ENCODE measurements at regions of chr2 and their contacts with region 1.

Region 1: DNA sequence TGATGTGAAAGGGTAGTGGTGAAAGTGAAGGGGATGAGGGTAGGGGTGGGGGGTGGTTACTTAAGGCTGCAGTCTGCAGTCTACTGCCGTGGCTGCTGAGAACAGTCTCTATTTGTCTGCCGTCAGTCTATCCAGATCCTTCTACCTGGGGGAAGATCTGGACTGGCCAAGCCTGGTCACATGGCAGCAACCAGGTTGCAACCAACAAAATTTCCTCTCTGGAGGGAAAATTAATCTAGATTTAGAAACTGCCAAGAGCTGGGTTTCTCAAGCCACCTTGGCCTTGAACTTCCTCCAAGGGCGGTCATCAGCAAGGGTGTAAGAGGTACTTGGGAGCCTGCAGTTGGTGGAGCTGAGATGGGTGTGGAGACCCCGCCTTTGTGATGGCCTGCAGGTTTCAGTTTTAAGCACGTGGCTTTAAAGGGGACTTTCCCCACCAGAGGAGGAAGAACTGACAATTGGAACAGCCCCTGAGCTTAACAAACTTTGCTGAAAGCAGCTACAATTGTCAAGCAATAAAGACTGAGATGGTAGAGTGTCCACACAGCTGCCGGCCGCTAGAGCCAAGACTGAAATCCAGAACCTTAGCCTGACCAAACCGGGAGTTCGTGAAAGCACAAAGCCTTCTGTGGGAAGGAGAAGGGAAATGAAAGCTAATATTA is 31.4 kb upstream of the KCMF1 start:
- DNase-seq: peak; percentile 63
- ATAC-seq: peak; percentile 88
- H3K4me3 Mint-ChIP-seq: peak overlapping the region; percentile 69
- H3K27ac Mint-ChIP-seq: peak overlapping the region; percentile 94
- H3K4me1 Mint-ChIP-seq: peaks cover 62% of the 10 kb centered on the region
- H3K27me3 Mint-ChIP-seq: no peaks in the 10 kb centered on the region
- CTCF ChIP-seq: no peak

Region 2: DNA sequence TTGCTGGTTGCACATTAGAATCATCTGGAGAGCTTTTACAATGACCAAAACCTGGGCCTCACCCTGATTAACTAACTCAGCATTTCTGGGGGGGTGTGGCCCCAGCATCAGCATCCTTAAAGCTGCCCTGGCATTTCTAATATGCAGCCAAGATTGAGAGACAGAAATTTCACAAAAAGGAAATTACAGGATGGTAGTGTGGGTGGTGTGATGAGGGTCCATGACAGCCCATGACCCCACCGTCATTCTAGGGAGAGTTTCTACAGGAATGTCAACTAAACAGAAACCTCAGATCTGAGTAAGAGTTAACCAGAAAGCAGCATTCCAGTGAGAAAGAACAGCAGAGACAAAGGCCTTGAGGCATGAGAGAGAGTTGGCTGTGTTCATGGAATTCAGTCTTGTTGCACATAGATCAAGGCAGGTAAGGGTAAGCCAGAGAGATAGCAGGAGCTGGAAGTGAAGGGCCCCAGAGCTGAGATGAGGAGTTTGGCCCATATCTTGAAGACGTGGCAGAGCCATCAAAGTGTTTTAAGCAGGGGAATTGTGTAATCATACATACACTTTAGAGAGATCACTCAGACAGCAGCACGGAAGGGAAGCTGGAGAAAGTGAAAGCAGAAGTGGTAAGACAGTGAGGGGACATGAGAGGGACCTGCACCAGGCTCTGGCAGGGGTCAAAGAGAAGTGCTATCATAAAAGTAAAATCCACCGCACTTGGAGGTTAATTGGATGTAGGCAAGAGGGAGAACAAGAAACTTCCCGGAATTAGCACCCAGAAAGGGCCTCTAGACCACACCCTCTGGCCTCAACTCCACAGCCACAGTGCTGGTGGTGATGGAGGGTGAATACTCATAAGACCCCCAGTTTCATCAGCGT is 50.9 kb before region 1 on chr2:
- CTCF ChIA-PET with region 1: no interaction called
- POLR2A ChIA-PET with region 1: interaction called, 13 read pairs
- intact Hi-C with region 1: no loop called
- DNase-seq: peak; percentile 35
- ATAC-seq: peak; percentile 100
- H3K4me3 Mint-ChIP-seq: peak overlapping the region; percentile 77
- H3K27ac Mint-ChIP-seq: peak overlapping the region; percentile 96
- H3K4me1 Mint-ChIP-seq: peaks cover 29% of the 10 kb centered on the region
- H3K27me3 Mint-ChIP-seq: no peaks in the 10 kb centered on the region
- CTCF ChIP-seq: no peak

Region 3: GRCh38 chr2:84919885-84920580 is 19.5 kb before region 1 on chr2:
- CTCF ChIA-PET with region 1: interaction called, 186 read pairs
- POLR2A ChIA-PET with region 1: interaction called, 59 read pairs
- intact Hi-C with region 1: no loop called
- DNase-seq: no peak
- ATAC-seq: peak; percentile 59
- H3K4me3 Mint-ChIP-seq: peak overlapping the region; percentile 73
- H3K27ac Mint-ChIP-seq: peak overlapping the region; percentile 96
- H3K4me1 Mint-ChIP-seq: peaks cover 63% of the 10 kb centered on the region
- H3K27me3 Mint-ChIP-seq: no peaks in the 10 kb centered on the region
- CTCF ChIP-seq: no peak

Region 4: DNA sequence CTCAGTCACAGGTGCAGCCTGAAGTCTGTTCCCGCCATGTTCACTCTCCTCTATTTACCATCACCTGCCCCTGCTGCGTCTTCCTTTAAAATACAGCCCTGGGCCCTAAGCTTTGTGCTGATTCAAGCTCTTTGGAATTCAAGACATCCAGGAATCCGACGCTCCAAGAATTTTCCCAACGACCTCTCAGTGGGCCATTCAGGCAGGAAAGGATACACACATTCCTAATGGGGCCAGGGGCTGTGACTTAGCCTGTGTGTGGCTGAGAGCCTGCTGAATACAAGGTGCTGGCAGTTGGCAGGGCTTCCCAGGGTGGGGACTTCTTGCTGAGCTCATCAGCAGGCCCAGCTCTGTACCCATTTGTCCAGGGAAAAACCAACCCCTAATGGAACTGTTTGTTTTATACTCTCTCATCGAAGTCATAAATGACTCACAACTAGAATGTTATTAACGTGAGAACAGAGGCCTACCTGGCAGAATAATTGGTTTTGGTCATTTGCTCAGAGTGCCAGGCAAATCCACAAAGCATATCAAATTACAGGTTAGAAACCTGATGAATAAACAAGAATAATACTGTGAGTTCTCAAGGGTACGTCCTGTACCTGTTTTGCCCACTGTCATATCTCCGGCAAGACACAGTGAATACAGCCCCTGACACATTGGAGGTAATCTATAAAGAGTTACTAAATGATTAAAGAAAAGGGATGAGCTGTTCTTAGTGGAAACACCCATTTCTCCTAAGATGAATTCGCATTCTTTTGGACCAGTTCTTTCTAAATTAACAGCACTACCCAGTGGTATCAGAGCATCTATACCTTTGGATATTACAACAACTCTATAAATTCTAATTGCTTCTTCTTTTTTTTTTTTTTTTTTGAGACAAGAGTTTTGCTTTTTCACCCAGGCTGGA is 18.8 kb after region 1 on chr2:
- CTCF ChIA-PET with region 1: no interaction called
- POLR2A ChIA-PET with region 1: interaction called, 11 read pairs
- intact Hi-C with region 1: no loop called
- DNase-seq: no peak
- ATAC-seq: peak; percentile 11
- H3K4me3 Mint-ChIP-seq: no peak overlapping the region
- H3K27ac Mint-ChIP-seq: peak overlapping the region; percentile 42
- H3K4me1 Mint-ChIP-seq: peaks cover 44% of the 10 kb centered on the region
- H3K27me3 Mint-ChIP-seq: no peaks in the 10 kb centered on the region
- CTCF ChIP-seq: no peak

Region 5: DNA sequence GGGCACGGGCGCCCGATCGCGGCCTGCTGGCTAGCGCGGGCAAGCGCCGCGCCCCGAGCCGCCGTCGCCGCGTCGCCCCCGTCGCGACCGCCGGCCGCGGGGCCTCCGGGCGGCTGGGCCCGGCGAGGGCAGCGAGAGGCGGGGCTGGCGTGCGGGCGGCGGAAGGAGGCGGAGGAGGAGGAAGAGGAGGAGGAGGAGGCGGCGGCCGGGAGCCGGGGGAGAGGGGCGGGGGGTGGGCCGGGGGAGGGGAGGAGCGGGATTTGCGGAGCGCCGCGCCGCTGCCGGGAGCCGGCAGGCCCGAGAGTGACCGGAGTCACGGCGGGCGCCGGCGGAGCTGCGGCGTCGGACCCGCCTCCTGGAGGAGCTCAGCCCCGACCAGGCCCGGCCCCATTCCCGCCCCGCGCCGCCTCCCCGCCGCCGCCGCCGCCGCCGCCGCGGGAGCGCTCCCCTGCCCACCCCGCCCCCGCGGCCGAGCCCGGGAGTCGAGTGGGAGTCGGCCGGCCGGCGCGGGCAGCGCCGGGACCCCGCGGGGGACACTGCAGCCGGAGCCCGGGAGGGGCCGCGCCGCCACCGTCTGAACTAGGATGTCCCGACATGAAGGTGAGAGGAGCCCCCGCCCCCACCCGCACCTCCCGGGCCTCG is 31.4 kb after region 1 on chr2 and contains the start of gene KCMF1:
- CTCF ChIA-PET with region 1: interaction called, 7 read pairs
- POLR2A ChIA-PET with region 1: interaction called, 302 read pairs
- intact Hi-C with region 1: loop called (anchors 1 kb)
- DNase-seq: peak; percentile 77
- ATAC-seq: peak; percentile 56
- H3K4me3 Mint-ChIP-seq: peak within 1 kb of the TSS; percentile 97
- H3K27ac Mint-ChIP-seq: peak within 1 kb of the TSS; percentile 98
- H3K4me1 Mint-ChIP-seq: peaks cover 57% of the 10 kb centered on the region
- H3K27me3 Mint-ChIP-seq: no peaks in the 10 kb centered on the region
- CTCF ChIP-seq: no peak
- total RNA-seq, gene KCMF1: 77.1 and 96.6 TPM in 2 replicates

Region 6: GRCh38 chr2:85017411-85018048 is 78.0 kb after region 1 on chr2:
- CTCF ChIA-PET with region 1: interaction called, 5 read pairs
- POLR2A ChIA-PET with region 1: interaction called, 8 read pairs
- intact Hi-C with region 1: loop called (anchors 2 kb)
- DNase-seq: no peak
- ATAC-seq: no peak
- H3K4me3 Mint-ChIP-seq: no peak overlapping the region
- H3K27ac Mint-ChIP-seq: peak overlapping the region; percentile 11
- H3K4me1 Mint-ChIP-seq: peaks cover 61% of the 10 kb centered on the region
- H3K27me3 Mint-ChIP-seq: no peaks in the 10 kb centered on the region
- CTCF ChIP-seq: no peak

Measured in activated B cell treated with CpG ODN at 0.5 μM for 24 hours (primary cell).